ENCODE measurements at regions of chr14 and their contacts with region 1.

Region 1: DNA sequence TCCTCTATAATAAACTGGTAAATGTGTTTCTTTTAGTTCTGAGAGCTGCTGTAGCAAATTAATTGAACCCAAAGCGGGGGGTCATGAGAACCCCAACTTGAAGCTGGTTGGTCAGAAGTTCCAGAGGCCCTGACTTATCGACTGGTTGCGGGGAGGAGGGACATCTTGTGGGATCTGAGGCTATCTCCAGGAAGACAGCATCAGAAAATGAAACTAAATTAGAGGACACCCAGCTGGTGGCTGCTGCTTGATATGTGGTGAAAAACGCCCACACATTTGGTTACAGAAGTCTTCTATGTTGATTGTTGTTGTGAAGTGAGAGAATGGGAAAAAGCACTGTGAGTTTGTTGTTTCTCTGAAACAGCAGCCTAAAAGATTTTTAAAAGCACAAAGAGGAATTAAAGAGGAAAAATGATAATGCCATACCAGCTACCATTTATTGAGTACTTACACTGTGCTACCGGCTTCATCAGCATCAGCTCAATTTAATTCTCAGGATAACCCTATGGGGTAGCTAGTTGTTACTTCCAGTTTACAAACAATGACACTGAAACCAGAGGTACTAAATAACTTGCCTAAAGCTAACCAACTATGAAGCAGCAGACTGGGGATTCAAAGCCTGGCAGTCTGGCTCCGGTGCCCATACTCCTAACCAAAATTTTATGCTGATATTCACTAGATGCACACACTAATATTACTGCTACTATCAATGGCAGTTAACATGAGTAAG is 24.3 kb downstream of the DDX24 start:
- DNase-seq: no peak
- H3K4me3 ChIP-seq: no peak overlapping the region
- H3K27ac ChIP-seq: no peak overlapping the region
- H3K4me1 ChIP-seq: no peaks in the 10 kb centered on the region
- H3K27me3 ChIP-seq: no peaks in the 10 kb centered on the region
- CTCF ChIP-seq: no peak
- POLR2A ChIP-seq: no peak

Region 2: DNA sequence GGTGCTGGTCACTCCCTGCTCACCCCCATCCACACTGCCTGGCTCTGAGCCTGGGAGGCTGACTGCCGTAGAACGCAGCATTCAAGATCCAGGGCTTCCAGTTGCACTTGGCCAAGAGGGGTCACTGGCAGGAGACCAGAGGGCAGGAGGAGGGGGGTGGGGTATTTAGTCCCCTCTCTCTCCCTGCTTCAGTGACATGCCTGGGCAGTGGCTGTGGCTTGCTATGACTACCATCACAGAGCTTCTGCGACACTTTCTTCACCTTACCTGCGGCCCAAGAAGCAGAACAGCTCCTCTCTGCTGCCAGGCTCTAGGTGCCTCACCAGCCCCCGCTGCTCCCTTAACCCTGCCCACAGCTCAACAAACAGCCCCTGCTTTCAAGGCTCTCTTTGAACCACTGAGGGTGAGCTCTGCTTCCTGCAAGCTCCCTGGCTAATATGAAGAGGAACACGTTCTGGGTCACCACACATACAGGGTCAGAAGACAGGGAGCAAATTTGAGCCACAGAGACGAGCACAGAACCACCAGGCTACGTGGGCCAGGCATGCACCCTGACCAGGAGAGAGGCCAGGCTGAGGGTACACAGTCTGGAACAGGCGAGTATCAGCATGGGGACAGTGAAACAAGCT is 996.7 kb before region 1 on chr14:
- intact Hi-C with region 1: no loop called
- DNase-seq: no peak
- H3K4me3 ChIP-seq: no peak overlapping the region
- H3K27ac ChIP-seq: no peak overlapping the region
- H3K4me1 ChIP-seq: no peaks in the 10 kb centered on the region
- H3K27me3 ChIP-seq: no peaks in the 10 kb centered on the region
- CTCF ChIP-seq: no peak
- POLR2A ChIP-seq: no peak

Region 3: DNA sequence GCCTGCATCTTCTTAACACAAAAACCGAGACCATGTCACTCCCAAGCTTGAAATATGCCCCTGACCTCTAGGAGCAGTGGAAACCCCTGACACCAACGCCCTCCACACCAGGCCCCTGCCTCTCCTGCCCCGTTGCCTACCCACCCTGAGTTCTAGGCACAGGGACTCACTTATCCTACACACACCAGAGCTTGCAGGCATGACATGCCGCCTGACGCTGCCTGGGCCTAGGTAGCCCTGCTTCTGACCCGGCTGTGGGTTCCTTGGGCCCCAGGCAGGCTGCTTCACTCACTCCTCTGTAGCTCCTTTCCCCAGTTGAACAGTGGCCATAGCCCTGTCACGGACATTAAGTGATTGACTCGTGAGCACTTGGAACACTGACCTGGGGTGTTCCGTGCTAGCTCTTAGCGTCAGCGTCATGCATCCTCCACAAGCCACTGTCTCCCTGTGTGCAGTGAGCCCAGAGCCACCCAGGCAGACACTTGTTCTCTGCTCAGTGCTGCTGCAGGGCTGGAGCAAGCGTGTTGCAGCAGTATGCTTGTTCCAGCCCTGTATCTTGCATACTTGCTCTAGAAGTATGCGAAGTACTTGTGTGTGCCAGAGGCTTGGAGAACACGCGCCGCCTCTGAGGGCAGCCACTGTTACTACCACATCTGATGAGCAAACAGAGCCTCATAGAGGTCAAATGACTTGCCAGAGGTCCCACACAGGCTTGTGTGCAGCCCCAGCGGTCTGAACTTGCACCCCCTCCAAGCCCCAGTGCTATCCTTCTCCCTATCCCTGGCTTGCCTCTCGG is 15.0 kb before region 1 on chr14:
- intact Hi-C with region 1: no loop called
- DNase-seq: no peak
- H3K4me3 ChIP-seq: no peak overlapping the region
- H3K27ac ChIP-seq: no peak overlapping the region
- H3K4me1 ChIP-seq: no peaks in the 10 kb centered on the region
- H3K27me3 ChIP-seq: no peaks in the 10 kb centered on the region
- CTCF ChIP-seq: no peak
- POLR2A ChIP-seq: no peak

Region 4: GRCh38 chr14:94581127-94581999 is 524.6 kb after region 1 on chr14 and contains the start of gene SERPINA5:
- intact Hi-C with region 1: loop called (anchors 5 kb)
- DNase-seq: peak; percentile 40 to 86
- H3K4me3 ChIP-seq: peak within 1 kb of the TSS in 2 of 3 donors; percentile 31 to 49
- H3K27ac ChIP-seq: peak within 1 kb of the TSS; percentile 31 to 78
- H3K4me1 ChIP-seq: peaks cover 0 to 11% of the 10 kb centered on the region in 2 donors
- H3K27me3 ChIP-seq: no peaks in the 10 kb centered on the region
- CTCF ChIP-seq: no peak
- POLR2A ChIP-seq: no peak
- total RNA-seq, gene SERPINA5: 4.3 to 32.9 (median 20.6) TPM